ENCODE measurements at regions of chr10 and their contacts with region 1.

Region 1: DNA sequence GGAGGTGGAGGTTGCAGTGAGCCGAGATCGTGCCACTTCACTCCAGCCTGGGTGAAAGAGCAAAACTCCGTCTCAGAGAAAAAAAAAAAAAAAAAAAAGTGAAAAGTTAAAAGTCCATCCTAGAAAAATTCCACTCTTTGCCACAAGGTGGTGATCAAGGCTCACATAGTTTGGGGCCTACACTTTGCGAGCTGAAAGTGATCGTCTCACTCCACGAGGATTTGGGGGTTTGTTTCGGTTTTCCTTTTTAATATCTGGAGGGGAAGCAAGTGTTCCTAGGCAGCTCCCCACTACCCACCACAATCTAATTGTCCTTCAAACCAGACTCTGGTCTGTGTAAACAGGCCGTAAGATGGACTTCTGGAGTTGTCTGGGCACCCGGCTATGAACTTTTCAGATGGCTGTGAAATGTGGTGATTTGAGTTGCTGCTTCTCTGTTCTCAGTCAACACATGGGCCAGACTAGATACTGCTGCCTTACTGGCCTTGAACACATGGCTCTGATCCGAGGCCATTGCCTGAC is 27.1 kb downstream of the PRLHR start:
- DNase-seq: peak; percentile 27 to 69
- H3K4me3 ChIP-seq: no peak overlapping the region
- H3K4me1 ChIP-seq: no peaks in the 10 kb centered on the region
- H3K27me3 ChIP-seq: no peaks in the 10 kb centered on the region

Region 2: GRCh38 chr10:117782276-117782675 is 786.1 kb before region 1 on chr10:
- in situ Hi-C with region 1: no loop called
- DNase-seq: no peak
- H3K4me3 ChIP-seq: no peak overlapping the region
- H3K4me1 ChIP-seq: no peaks in the 10 kb centered on the region
- H3K27me3 ChIP-seq: no peaks in the 10 kb centered on the region

Region 3: GRCh38 chr10:118720685-118721538 is 152.5 kb after region 1 on chr10:
- in situ Hi-C with region 1: loop called (anchors 10 kb)
- DNase-seq: peak; percentile 36 to 76
- H3K4me3 ChIP-seq: no peak overlapping the region
- H3K4me1 ChIP-seq: no peaks in the 10 kb centered on the region; the same call in 1 of the 2 replicates
- H3K27me3 ChIP-seq: no peaks in the 10 kb centered on the region

Region 4: DNA sequence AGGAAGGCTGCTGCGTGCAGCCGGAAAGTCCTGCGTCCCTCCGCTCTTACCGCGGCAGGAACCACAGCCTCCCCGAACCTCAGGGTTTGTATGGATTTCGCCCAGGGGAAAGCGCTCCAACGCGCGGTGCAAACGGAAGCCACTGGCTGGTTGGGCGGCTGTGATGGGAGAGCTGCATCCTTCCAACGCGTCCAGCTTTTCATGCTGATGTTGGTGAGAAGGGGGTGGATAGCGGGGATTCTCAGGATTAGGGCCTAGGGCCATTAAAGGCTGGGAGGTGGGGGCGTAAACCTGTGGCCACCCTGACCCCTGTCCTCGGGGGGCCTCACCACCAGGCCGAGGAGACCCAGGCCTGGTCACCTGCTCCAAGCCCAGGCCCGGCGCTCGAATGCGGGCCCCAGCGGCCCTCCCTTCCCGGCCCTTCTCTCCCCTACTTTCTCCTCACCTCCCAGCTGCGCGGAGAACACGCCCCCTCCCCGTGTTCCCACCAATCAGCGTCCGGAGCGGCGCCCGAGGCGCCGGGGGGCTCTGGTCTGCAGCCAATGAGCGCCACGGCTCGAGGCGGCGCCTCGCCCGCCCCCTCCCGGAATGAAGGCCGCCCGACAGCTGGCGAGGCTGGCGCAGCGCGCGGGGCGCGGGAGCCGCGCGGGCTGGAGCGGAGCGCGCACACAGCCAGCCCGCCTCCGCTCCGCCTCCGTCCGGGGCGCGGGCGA is 460.7 kb after region 1 on chr10:
- in situ Hi-C with region 1: loop called (anchors 10 kb)
- DNase-seq: peak; percentile 75 to 94
- H3K4me3 ChIP-seq: peak overlapping the region; percentile 18
- H3K4me1 ChIP-seq: peaks cover 10% of the 10 kb centered on the region
- H3K27me3 ChIP-seq: no peaks in the 10 kb centered on the region

Region 5: GRCh38 chr10:119041326-119041725 is 472.9 kb after region 1 on chr10:
- in situ Hi-C with region 1: no loop called
- DNase-seq: no peak
- H3K4me3 ChIP-seq: no peak overlapping the region
- H3K4me1 ChIP-seq: no peaks in the 10 kb centered on the region
- H3K27me3 ChIP-seq: no peaks in the 10 kb centered on the region

Region 6: DNA sequence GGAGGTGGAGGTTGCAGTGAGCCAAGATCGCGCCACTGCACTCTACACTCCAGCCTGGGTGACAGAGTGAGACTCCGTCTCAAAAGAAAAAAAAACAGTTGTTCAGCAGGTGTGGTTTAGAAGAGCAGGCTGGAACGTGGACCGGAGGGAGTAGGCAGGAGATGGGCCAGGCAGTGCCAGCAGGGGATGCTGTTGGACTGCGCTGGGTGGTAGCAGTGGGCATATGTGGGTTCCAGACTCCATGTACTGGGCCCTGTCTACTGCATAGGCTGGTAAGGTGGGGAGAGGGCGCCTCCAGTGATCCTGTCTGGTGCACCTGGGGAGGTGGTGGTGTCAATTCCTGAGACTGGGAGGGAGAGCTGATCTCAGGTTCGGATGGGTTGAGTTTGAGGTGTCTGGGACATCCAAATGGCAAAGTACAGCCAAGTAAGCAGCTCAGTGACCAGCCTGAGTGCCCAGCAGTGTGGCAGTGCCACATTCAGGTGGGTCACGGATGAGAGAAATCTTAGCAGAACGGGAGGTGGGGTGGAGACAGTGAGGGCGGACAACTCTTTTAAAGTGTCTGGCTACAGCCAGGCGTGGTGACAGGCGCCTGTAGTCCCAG is 571.2 kb after region 1 on chr10:
- in situ Hi-C with region 1: no loop called
- DNase-seq: peak in 1 of 2 experiments; percentile 30
- H3K4me3 ChIP-seq: no peak overlapping the region
- H3K4me1 ChIP-seq: no peaks in the 10 kb centered on the region
- H3K27me3 ChIP-seq: no peaks in the 10 kb centered on the region

Region 7: DNA sequence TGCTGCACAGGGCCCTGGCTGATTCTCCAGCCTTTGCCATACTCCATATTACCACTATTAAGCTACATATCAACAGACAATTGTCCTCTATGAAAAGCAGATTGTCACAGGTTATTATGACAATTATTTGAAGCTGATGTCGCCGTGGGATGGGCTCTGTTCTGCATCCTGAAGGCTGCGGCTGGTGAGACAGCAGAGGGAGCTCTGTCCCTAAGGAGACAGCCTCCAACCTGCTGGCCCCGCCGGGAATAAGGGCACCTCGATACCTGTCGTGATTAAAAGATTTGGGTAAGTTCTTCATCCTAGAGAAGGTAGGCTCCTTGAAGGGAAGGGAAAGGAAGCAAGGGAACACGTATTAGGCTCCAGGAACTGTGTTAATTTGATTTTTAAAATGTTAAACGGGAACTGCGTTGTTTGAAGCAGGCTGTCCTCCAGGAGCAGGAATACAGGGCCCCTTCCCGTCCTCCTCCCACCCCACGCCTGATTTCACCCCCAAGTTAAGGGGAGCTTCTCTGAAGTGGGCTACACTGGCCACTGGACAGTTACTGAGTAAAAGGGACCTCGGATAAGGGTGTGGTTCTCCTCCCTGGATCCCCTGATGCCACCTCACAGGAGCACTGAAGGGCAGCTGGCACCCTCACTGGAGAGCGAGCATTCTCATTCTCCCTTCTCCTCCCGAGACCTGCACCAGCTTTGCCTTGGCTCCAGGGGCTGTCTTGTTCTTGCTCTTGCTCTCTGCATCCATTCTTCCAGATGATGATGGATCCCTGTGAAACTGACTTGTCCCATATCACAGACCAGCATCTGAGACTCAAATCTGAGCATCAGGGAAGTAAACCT is 1040.1 kb after region 1 on chr10:
- in situ Hi-C with region 1: no loop called
- DNase-seq: peak; percentile 11 to 65
- H3K4me3 ChIP-seq: no peak overlapping the region
- H3K4me1 ChIP-seq: no peaks in the 10 kb centered on the region
- H3K27me3 ChIP-seq: no peaks in the 10 kb centered on the region